Activated CD4-positive, alpha-beta T cell treated with anti-CD3 and anti-CD28 coated beads for 36 hours (primary cell): ENCODE measurements at regions of chr1 and their contacts with region 1.

Region 1: GRCh38 chr1:172662464-172663109 is 3.7 kb downstream of the FASLG start:
- DNase-seq: peak; percentile 95
- ATAC-seq: peak; percentile 82
- H3K4me3 Mint-ChIP-seq: peak overlapping the region; percentile 78
- H3K27ac Mint-ChIP-seq: peak overlapping the region; percentile 57
- H3K4me1 Mint-ChIP-seq: peaks cover 74% of the 10 kb centered on the region
- H3K27me3 Mint-ChIP-seq: peaks cover 17% of the 10 kb centered on the region

Region 2: DNA sequence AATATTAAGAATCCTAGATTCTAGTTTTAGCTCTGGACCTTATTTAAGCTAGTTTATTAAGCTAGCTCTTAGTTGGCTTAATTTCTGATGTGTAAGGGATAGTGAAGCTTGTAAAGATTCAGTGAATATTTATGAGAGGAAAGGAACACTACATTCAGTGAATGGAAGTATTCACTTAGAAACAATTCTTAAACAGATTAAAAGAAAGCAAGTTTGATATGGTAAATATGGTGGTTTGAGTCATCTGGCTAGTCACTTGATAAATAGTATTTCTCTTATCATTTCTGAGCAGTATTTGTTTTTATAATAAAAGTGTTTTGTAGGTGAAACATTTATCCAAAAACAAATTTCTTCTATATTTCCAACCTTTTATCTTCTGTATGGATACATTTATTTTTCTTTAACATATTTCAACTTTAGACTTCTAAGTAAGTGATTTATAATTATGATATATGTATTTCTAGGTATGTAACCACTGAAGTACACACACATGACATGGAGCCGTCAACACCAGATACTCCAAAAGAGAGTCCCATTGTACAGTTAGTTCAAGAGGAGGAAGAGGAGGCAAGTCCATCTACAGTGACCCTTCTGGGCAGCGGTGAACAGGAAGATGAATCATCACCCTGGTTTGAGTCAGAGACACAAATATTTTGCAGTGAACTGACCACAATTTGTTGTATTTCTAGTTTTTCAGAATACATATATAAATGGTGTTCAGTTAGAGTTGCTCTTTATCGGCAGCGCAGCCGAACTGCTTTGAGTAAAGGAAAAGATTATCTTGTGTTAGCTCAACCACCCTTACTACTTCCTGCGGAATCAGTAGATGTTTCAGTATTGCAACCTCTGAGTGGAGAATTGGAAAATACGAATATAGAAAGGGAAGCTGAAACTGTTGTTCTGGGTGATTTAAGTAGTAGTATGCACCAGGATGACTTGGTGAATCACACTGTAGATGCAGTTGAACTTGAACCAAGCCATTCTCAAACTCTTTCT is 74.0 kb before region 1 on chr1:
- CTCF ChIA-PET with region 1: no interaction called
- POLR2A ChIA-PET with region 1: no interaction called
- intact Hi-C with region 1: loop called in 1 of 2 experiments (anchors 1 kb)
- DNase-seq: peak; percentile 48
- ATAC-seq: peak; percentile 95
- H3K4me3 Mint-ChIP-seq: no peak overlapping the region
- H3K27ac Mint-ChIP-seq: peak overlapping the region; percentile 28
- H3K4me1 Mint-ChIP-seq: peaks cover 25% of the 10 kb centered on the region
- H3K27me3 Mint-ChIP-seq: no peaks in the 10 kb centered on the region

Region 3: DNA sequence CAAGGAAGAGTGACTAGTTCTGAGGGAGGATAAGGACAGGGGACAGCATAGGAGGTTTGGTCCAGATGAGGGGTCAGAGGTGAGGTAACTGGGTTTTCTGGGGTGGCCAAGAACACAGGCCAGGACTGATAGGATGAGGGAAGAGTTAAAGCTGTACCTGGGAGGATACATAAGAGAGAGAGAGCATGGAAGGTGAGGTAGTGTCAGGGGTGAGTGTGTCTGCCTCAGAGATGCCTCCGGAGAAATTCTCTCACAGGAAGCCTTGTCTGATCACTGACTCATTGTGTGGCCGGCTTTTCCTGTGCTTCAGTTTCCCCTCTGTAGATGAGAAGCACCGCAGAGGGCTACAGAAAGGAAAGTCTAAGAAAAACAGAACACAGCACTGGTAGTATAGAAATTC is 36.5 kb after region 1 on chr1:
- CTCF ChIA-PET with region 1: interaction called, 3 read pairs
- POLR2A ChIA-PET with region 1: interaction called, 6 read pairs
- intact Hi-C with region 1: loop called (anchors 1 to 2 kb)
- DNase-seq: peak; percentile 82
- ATAC-seq: peak; percentile 80
- H3K4me3 Mint-ChIP-seq: peak overlapping the region; percentile 31
- H3K27ac Mint-ChIP-seq: peak overlapping the region; percentile 97
- H3K4me1 Mint-ChIP-seq: peaks cover 50% of the 10 kb centered on the region
- H3K27me3 Mint-ChIP-seq: peaks cover 4% of the 10 kb centered on the region

Region 4: GRCh38 chr1:172719694-172720138 is 57.1 kb after region 1 on chr1:
- CTCF ChIA-PET with region 1: interaction called, 16 read pairs
- POLR2A ChIA-PET with region 1: no interaction called
- intact Hi-C with region 1: loop called in 1 of 2 experiments (anchors 2 kb)
- DNase-seq: no peak
- ATAC-seq: peak; percentile 51
- H3K4me3 Mint-ChIP-seq: no peak overlapping the region
- H3K27ac Mint-ChIP-seq: no peak overlapping the region
- H3K4me1 Mint-ChIP-seq: peaks cover 35% of the 10 kb centered on the region
- H3K27me3 Mint-ChIP-seq: peaks cover 6% of the 10 kb centered on the region